Calu3 (cell line): ENCODE measurements at regions of chr6 and their contacts with region 1.

Region 1: DNA sequence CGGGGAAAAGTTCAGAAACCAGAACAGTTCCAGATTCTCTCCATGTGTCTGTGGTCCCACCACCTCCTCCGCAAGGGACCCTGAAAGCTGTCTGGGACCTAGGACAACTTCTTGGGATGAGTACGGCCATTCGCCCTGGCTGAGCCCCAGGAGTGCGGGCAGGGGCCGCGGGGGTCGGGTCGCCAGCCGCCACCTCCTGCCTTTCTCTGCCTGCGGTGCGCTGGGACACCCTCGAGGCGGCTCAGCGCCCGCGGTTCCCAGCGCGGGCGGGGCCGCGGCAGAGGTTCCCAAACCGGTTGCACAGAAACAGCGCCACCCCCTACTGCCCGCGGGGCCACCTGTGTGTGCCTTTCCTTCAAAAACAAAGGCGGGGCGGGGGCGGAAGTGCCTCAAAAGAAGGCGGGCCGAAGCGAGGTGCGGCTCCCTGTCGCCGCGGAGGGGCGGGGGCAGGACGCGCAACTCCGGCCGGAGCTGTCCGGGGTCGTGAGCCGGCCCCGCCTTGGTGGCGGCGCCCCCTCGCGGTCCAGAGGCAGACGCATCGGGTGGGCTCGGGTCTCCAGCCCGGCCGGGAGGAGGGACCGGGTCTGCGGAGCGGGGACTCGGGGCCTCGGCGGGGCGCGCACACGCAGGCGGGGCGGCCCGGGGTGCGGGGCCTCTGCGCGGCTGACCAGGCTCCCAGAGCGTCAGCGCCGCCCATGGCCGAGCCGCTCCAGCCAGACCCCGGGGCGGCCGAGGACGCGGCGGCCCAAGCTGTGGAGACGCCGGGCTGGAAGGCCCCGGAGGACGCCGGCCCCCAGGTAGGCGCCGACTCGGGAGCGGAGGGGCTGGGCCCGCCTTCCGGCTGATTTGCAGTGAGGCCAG is at the start of gene HEBP2:
- DNase-seq: peak; percentile 95
- H3K4me3 Mint-ChIP-seq: peak within 1 kb of the TSS; percentile 76
- H3K27ac Mint-ChIP-seq: peak within 1 kb of the TSS; percentile 52
- H3K4me1 Mint-ChIP-seq: no peaks in the 10 kb centered on the region
- H3K27me3 Mint-ChIP-seq: no peaks in the 10 kb centered on the region
- CTCF ChIP-seq: peak; percentile 74
- total RNA-seq, gene HEBP2: 33.4 and 36.7 TPM in 2 replicates

Region 2: GRCh38 chr6:138001750-138002349 is 402.2 kb before region 1 on chr6:
- CTCF ChIA-PET with region 1: interaction called, 4 read pairs
- intact Hi-C with region 1: loop called (anchors 5 kb)
- DNase-seq: peak; percentile 65
- H3K4me3 Mint-ChIP-seq: no peak overlapping the region
- H3K27ac Mint-ChIP-seq: no peak overlapping the region
- H3K4me1 Mint-ChIP-seq: peaks cover 4% of the 10 kb centered on the region
- H3K27me3 Mint-ChIP-seq: no peaks in the 10 kb centered on the region
- CTCF ChIP-seq: peak; percentile 62

Region 3: GRCh38 chr6:138031850-138032249 is 372.2 kb before region 1 on chr6:
- CTCF ChIA-PET with region 1: no interaction called
- intact Hi-C with region 1: no loop called
- DNase-seq: no peak
- H3K4me3 Mint-ChIP-seq: no peak overlapping the region
- H3K27ac Mint-ChIP-seq: no peak overlapping the region
- H3K4me1 Mint-ChIP-seq: peaks cover 25% of the 10 kb centered on the region
- H3K27me3 Mint-ChIP-seq: no peaks in the 10 kb centered on the region
- CTCF ChIP-seq: no peak

Region 4: DNA sequence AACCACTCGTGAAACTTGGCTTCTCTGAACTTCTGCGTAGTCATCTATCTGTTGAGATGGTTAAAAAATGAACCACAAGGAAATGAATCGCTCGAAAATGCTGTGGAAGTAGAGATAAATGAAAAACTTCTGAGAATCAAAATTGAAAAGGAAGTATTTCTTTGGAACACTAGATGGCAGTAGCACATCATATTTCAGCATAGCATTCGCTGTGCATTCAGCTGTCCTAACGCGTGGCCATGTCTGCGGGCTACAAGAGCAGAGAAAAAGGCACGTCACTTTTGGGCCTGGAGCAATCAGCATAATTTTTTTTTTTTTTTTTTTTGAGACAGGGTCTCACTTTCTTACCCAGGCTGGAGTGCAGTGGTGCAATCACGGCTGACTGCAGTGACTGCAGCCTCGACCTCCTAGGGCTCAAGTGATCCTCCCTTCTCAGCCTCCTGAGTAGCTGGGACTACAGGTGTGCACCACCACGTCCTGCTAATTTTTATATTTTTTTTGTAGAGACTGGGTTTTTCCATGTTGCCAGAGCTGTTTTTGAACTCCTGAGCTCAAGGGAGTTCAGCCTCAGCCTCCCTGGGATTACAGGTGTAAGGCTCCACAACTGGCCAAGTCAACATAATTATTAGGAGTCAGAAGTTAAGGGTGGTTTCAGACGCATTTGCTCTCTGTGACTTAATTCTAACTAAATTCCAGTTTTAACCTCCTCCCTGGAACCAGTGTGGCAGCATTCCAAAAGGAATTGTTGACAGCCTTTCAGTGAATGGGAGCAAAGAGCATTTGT is 288.0 kb before region 1 on chr6:
- CTCF ChIA-PET with region 1: no interaction called
- intact Hi-C with region 1: loop called (anchors 2 kb)
- DNase-seq: peak; percentile 28
- H3K4me3 Mint-ChIP-seq: no peak overlapping the region
- H3K27ac Mint-ChIP-seq: no peak overlapping the region
- H3K4me1 Mint-ChIP-seq: peaks cover 6% of the 10 kb centered on the region
- H3K27me3 Mint-ChIP-seq: no peaks in the 10 kb centered on the region
- CTCF ChIP-seq: peak; percentile 37

Region 5: GRCh38 chr6:138287144-138287955 is 116.7 kb before region 1 on chr6:
- CTCF ChIA-PET with region 1: no interaction called
- intact Hi-C with region 1: loop called (anchors 10 kb)
- DNase-seq: peak; percentile 73
- H3K4me3 Mint-ChIP-seq: no peak overlapping the region
- H3K27ac Mint-ChIP-seq: peak overlapping the region; percentile 19
- H3K4me1 Mint-ChIP-seq: peaks cover 8% of the 10 kb centered on the region
- H3K27me3 Mint-ChIP-seq: no peaks in the 10 kb centered on the region
- CTCF ChIP-seq: peak; percentile 37

Region 6: DNA sequence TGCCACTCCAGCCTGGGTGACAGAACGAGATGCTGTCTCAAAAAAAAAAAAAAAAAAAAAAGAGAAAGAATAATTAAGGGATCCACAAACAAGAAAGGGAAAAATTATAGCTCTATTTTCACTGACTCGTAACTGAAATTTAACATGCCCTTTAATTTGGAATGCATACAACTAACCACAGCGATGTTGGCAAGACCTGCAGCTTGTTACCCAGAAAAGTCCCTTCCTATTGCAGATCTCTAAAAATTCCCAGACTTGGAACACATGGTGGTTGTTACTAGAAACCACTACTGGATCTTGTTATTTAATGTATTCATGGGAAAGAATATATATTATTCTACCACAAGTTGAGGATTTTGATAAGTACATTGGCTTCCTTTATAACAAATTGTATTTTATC is 54.1 kb before region 1 on chr6:
- CTCF ChIA-PET with region 1: interaction called, 4 read pairs
- intact Hi-C with region 1: loop called (anchors 10 kb)
- DNase-seq: no peak
- H3K4me3 Mint-ChIP-seq: no peak overlapping the region
- H3K27ac Mint-ChIP-seq: no peak overlapping the region
- H3K4me1 Mint-ChIP-seq: peaks cover 16% of the 10 kb centered on the region
- H3K27me3 Mint-ChIP-seq: no peaks in the 10 kb centered on the region
- CTCF ChIP-seq: no peak

Region 7: GRCh38 chr6:138465007-138465645 is 61.1 kb after region 1 on chr6:
- CTCF ChIA-PET with region 1: no interaction called
- intact Hi-C with region 1: no loop called
- DNase-seq: peak; percentile 49
- H3K4me3 Mint-ChIP-seq: peak overlapping the region; percentile 25
- H3K27ac Mint-ChIP-seq: peak overlapping the region; percentile 82
- H3K4me1 Mint-ChIP-seq: peaks cover 59% of the 10 kb centered on the region
- H3K27me3 Mint-ChIP-seq: no peaks in the 10 kb centered on the region
- CTCF ChIP-seq: no peak